Activated CD8-positive, alpha-beta memory T cell treated with anti-CD3 and anti-CD28 coated beads, Interleukin-2, amount 10 ng/mL, durations not matched to agents 7 days and 5 days (primary cell): ENCODE measurements at regions of chr12 and their contacts with region 1.

Region 1: GRCh38 chr12:1644534-1645438 is 15.8 kb downstream of the WNT5B start:
- DNase-seq: no peak
- ATAC-seq: no peak
- H3K4me3 Mint-ChIP-seq: no peak overlapping the region
- H3K27ac Mint-ChIP-seq: no peak overlapping the region
- H3K4me1 Mint-ChIP-seq: peaks cover 17% of the 10 kb centered on the region
- H3K27me3 Mint-ChIP-seq: peaks cover 25% of the 10 kb centered on the region

Region 2: GRCh38 chr12:1594261-1595025 is 50.3 kb before region 1 on chr12 and contains the start of gene FBXL14:
- CTCF ChIA-PET with region 1: no interaction called
- DNase-seq: peak; percentile 93
- ATAC-seq: peak; percentile 69
- H3K4me3 Mint-ChIP-seq: peak within 1 kb of the TSS; percentile 87
- H3K27ac Mint-ChIP-seq: peak within 1 kb of the TSS; percentile 92
- H3K4me1 Mint-ChIP-seq: peaks cover 38% of the 10 kb centered on the region
- H3K27me3 Mint-ChIP-seq: no peaks in the 10 kb centered on the region
- total RNA-seq, gene FBXL14: 28.2 to 33.4 TPM

Region 3: GRCh38 chr12:1634590-1635191 is 10.1 kb before region 1 on chr12:
- CTCF ChIA-PET with region 1: interaction called, 16 read pairs
- DNase-seq: peak; percentile 71
- ATAC-seq: peak; percentile 77
- H3K4me3 Mint-ChIP-seq: no peak overlapping the region
- H3K27ac Mint-ChIP-seq: no peak overlapping the region
- H3K4me1 Mint-ChIP-seq: peaks cover 6% of the 10 kb centered on the region
- H3K27me3 Mint-ChIP-seq: peaks cover 61% of the 10 kb centered on the region

Region 4: GRCh38 chr12:1680804-1681492 is 36.2 kb after region 1 on chr12:
- CTCF ChIA-PET with region 1: no interaction called
- DNase-seq: no peak
- ATAC-seq: no peak
- H3K4me3 Mint-ChIP-seq: no peak overlapping the region
- H3K27ac Mint-ChIP-seq: no peak overlapping the region
- H3K4me1 Mint-ChIP-seq: no peaks in the 10 kb centered on the region
- H3K27me3 Mint-ChIP-seq: peaks cover 5% of the 10 kb centered on the region